ENCODE measurements at regions of chr19 and their contacts with region 1.

Region 1: DNA sequence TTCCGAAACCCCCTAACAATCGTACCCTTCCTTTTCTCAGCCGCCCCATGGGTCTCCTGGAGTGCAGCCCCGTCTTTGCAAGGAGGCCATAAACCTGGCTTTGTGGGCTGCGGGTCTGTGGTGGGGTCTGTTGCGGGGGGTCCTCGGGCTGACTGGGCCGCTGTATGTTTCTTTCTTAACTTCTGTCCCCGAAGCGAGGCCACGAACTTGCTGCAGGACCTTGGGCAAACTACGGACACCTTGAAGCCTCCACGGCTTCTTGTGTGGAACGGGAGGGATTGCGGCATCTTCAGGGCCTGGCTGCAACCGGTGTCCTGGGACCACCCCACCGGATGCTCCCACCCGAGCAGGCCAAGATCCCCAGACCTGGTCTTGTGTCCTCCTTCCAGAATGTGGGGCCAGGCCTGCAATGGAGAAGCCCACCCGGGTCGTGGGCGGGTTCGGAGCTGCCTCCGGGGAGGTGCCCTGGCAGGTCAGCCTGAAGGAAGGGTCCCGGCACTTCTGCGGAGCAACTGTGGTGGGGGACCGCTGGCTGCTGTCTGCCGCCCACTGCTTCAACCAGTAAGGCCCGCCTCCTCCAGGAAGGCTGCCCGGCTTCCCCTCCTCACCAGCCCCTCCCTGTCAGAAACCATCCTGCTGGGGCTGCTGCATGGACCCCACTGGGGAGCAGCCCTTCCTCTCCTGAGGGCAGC is 12.0 kb downstream of the TIMM13 start:
- DNase-seq: no peak
- H3K4me3 ChIP-seq: no peak overlapping the region
- H3K27ac ChIP-seq: no peak overlapping the region
- H3K27me3 ChIP-seq: no peaks in the 10 kb centered on the region
- CTCF ChIP-seq: no peak

Region 2: GRCh38 chr19:2302319-2303210 is 112.9 kb before region 1 on chr19:
- CTCF ChIA-PET with region 1: no interaction called
- POLR2A ChIA-PET with region 1: no interaction called
- DNase-seq: no peak
- H3K4me3 ChIP-seq: 0 out of 2 replicates have a peak overlapping the region, but pooled peaks have one; percentile 17
- H3K27ac ChIP-seq: no peak overlapping the region
- H3K27me3 ChIP-seq: peaks cover 27% of the 10 kb centered on the region
- CTCF ChIP-seq: no peak

Region 3: DNA sequence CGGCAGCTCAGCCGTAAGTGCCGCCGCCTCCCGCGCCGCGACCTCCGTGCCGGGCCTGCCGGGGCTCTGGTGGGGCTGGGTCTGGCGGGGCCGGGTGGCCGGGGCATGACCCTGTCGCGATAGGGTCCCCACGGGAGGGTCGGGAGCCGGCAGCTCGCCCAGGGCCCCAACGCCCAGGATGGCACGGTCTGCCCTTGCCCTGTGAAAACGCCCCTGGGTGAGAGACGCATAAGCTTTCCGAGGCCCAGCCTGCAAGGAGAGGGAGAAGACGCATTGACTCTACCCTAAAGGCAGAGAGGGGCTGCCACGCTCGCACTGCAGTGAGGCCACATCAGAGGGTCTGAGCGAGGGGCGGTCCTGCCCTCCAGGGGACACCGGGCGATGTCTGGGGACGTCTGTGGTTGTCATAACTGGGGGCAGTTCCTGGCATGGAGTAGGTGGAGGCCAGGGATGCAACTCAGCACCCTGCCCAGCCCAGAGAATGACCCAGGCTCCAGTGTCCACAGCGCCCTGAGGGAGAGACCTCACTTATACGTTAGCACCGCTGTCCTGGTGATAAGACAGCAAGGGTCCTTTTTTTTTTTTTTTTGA is 404.8 kb after region 1 on chr19:
- CTCF ChIA-PET with region 1: no interaction called
- POLR2A ChIA-PET with region 1: interaction called, 11 read pairs
- DNase-seq: no peak
- H3K4me3 ChIP-seq: peak overlapping the region; percentile 78
- H3K27ac ChIP-seq: no peak overlapping the region
- H3K27me3 ChIP-seq: no peaks in the 10 kb centered on the region
- CTCF ChIP-seq: no peak